ENCODE measurements at regions of chr18 and their contacts with region 1.

Region 1: DNA sequence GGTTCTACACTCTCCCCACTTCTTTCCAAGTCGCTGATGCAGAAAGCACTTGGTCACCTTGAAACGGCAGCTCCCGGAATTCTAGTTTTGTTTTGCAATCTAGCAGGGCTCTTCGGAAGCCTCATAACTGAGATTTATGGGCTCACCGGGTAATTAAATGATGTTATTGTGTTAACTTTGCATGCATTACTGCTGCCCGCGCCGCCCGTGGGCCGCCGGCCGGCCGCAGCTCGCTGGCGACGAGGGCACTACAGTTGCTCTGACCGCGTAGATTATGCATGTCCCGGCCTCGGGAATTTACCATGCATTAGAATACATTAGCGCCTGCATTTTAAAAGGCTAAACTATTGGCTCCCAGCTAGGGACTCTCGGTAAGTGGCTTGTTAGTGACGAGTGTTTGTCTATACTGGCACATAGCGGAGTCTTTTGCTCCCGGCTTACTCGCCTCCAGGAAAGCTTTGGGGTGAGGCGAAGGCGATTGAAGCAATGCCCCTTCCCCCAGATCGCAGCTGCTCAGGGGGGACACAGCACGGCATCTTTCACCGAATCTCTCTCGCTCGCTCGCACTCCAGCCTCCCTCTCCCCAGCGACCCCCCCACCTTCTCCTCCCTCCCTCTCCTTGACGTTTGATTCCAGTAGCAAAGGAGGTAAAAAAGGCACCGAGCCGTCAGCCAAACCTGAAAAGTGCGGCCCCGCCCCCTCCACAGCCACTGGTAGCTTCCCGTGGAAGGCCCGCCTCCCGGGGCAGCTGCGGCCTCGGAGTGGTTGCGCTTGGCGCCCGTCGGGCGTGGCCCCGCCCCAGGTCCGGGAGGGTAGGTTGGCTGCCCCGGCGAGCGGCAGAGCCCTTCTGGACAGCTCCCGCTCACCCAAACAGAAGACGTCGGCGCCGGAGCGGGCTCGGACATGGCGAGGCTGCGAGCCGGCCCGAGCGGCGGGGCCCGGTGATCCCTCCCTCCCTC is at the start of gene ONECUT2:
- DNase-seq: peak; percentile 91
- H3K4me3 ChIP-seq: peak within 1 kb of the TSS; percentile 31 to 58 (median 46)
- H3K27ac ChIP-seq: no peak within 1 kb of the TSS
- H3K4me1 ChIP-seq: peaks cover 18% of the 10 kb centered on the region
- H3K27me3 ChIP-seq: peaks cover 87 to 92% of the 10 kb centered on the region in 2 experiments
- CTCF ChIP-seq: no peak
- POLR2A ChIP-seq: no peak
- total RNA-seq, gene ONECUT2: 0.05 and 0.62 TPM in 2 replicates

Region 2: GRCh38 chr18:56638271-56639093 is 796.3 kb before region 1 on chr18 and contains the start of gene TXNL1:
- CTCF ChIA-PET with region 1: no interaction called
- POLR2A ChIA-PET with region 1: no interaction called
- dilution Hi-C with region 1: no loop called
- intact Hi-C with region 1: loop called (anchors 1 kb)
- DNase-seq: peak; percentile 99
- H3K4me3 ChIP-seq: peak within 1 kb of the TSS; percentile 89 to 92 (median 91)
- H3K27ac ChIP-seq: peak within 1 kb of the TSS; percentile 97
- H3K4me1 ChIP-seq: peaks cover 27% of the 10 kb centered on the region
- H3K27me3 ChIP-seq: no peaks in the 10 kb centered on the region
- CTCF ChIP-seq: no peak
- POLR2A ChIP-seq: peak; percentile 93
- total RNA-seq, gene TXNL1: 70.6 and 81.2 TPM in 2 replicates

Region 3: GRCh38 chr18:56748698-56749268 is 686.0 kb before region 1 on chr18:
- CTCF ChIA-PET with region 1: interaction called, 15 read pairs
- POLR2A ChIA-PET with region 1: no interaction called
- dilution Hi-C with region 1: no loop called
- intact Hi-C with region 1: loop called (anchors 2 kb)
- DNase-seq: peak; percentile 60
- H3K4me3 ChIP-seq: no peak overlapping the region
- H3K27ac ChIP-seq: no peak overlapping the region
- H3K4me1 ChIP-seq: peaks cover 4% of the 10 kb centered on the region
- H3K27me3 ChIP-seq: no peaks in the 10 kb centered on the region
- CTCF ChIP-seq: peak; percentile 24 to 40
- POLR2A ChIP-seq: no peak

Region 4: DNA sequence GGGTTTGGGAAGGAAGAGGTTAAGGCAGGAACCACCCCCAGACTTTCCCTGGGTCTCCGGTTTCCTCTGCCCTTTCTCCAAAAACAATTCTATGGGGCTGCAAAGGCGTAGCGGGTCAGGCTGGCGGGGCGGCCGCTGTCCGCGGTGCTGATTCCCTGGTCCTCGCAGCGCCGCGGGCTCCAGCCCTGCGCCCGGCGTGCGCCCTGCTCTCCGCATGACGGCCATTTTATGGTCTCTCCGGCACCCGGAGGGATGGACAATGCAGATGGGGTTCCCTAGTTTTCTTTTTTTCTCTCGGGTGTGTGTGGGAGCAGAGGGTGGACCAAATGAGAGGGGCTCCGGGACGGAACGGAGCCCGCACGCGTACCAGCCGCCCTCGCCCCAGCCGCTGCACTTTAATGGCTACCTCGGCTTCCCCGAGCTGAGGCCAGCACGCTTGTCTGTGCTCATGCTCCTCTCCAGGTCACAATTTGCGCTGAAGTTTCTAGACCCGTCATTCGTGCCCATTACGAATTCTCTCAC is 80.8 kb before region 1 on chr18:
- CTCF ChIA-PET with region 1: no interaction called
- POLR2A ChIA-PET with region 1: no interaction called
- dilution Hi-C with region 1: no loop called
- intact Hi-C with region 1: loop called (anchors 5 kb)
- DNase-seq: peak; percentile 22
- H3K4me3 ChIP-seq: no peak overlapping the region
- H3K27ac ChIP-seq: no peak overlapping the region
- H3K4me1 ChIP-seq: no peaks in the 10 kb centered on the region
- H3K27me3 ChIP-seq: peaks cover 26 to 27% of the 10 kb centered on the region in 2 experiments
- CTCF ChIP-seq: no peak
- POLR2A ChIP-seq: no peak

Region 5: DNA sequence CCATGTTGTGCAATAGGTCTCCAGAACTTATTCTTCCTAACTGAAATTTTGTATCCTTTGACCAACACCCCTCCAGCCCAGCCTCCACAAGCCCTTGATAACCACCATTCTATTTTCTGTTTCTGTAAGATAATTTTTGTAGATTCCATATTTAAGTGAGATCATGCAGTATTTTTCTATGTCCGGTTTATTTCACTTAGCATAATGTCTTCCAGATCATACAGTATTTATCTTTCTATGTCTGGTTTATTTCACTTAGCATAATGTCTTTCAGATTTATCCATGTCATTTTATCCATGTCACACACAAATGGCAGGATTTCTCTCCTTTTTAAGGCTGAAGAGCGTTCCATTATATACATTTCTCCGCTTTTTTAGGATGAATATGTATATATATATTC is 24.1 kb before region 1 on chr18:
- CTCF ChIA-PET with region 1: no interaction called
- POLR2A ChIA-PET with region 1: no interaction called
- dilution Hi-C with region 1: no loop called
- intact Hi-C with region 1: loop called (anchors 1 kb)
- DNase-seq: no peak
- H3K4me3 ChIP-seq: no peak overlapping the region
- H3K27ac ChIP-seq: no peak overlapping the region
- H3K4me1 ChIP-seq: no peaks in the 10 kb centered on the region
- H3K27me3 ChIP-seq: no peaks in the 10 kb centered on the region
- CTCF ChIP-seq: no peak
- POLR2A ChIP-seq: no peak

Measured in endothelial cell of umbilical vein (primary cell).